Cardiac septum (tissue), 1 donor: ENCODE measurements at regions of chr1 and their contacts with region 1.

Region 1: GRCh38 chr1:110106013-110106941 is 6.0 kb upstream of the UBL4B start:
- DNase-seq: no peak

Region 2: GRCh38 chr1:110053557-110054428 is 52.5 kb before region 1 on chr1:
- intact Hi-C with region 1: loop called (anchors 1 kb)
- DNase-seq: no peak

Region 3: GRCh38 chr1:110087812-110088738 is 18.2 kb before region 1 on chr1:
- intact Hi-C with region 1: loop called (anchors 2 kb)
- DNase-seq: no peak